Aorta (tissue), 5 donors: ENCODE measurements at regions of chr1 and their contacts with region 1.

Region 1: DNA sequence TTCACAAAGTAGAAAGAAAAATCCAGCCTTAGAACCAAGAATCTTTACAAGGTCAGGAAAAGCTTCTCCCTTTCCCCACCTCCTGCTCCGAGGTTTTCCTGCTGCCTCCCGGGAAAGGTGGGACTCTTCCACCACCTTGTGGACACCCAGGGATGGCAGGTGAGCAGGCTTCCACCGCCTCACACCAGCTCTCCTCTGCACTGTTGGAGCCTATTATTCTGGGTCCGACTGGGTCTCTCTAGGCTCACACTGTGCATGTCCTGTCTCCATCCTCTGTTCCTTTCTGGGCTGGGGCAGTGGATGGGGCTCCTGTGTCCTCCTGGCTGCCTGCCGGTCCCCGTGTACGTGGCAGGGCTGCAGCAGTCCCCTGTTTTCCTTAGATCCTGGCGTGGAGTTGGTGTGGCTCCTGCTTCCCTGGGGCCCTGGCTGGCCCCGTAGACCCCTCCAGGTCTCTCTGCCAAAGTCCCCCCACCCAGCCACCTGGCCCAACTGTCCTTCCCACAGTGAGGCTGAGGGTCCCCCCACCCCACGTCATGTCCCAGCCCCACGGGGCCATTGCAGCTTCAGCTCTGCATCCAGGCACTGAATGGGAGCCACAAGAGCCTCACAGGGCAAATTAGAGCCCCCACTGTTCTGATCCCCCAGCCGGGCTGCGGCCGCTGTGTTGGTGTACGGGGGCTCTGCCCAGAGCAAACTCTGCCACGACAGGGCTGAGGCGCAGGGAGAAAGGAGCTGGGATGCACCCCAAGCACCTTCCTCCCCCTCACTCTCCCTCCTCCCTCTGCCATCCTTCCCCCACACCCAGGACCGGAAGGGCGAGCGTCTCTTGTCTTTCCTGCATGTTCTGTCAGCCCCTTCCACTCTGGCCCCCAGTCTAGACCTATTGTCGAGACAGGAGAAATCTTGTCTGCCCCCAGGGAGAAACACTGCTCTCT is 3.3 kb upstream of the SLC45A1 start:
- DNase-seq: peak; percentile 83 to 89
- ATAC-seq: peak; percentile 77
- H3K4me3 ChIP-seq: no peak overlapping the region
- H3K27ac ChIP-seq: no peak overlapping the region
- H3K4me1 ChIP-seq: no peaks in the 10 kb centered on the region
- H3K27me3 ChIP-seq: no peaks in the 10 kb centered on the region

Region 2: DNA sequence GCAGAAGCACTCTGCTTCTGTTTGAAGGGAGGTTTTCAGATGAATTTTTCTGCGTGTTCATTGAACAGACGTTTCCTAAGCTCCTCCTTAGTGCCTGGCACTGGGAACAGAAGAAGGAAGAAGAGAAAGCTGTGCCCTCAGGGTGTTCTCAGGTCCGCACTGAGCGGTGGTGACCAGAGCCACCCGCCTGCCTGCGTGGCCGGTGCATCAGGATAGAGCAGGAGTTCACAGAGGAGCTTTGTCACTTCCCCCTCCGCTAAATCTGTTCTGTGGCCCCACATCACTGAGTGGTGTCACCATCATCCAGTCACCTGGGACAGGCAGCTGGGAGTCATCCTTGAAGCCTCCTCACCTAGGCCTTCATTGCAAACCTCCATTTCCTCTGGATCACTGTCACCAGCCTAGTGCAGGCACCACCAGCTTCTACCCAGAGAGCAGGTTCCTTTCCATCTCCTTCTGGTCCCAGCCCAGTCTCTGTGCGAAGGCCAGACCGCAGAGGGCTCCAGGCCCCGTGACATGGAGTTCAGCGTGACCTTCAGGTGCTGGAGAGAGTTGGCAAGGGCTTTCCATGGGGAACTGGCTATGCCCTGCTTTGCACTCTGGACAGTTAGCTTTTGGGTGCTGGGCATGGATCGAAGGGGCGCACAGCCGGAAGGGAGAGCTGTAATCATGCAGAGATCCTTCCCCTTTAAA is 331.4 kb before region 1 on chr1:
- intact Hi-C with region 1: loop called (anchors 2 to 5 kb)
- DNase-seq: peak in 1 of 2 donors; percentile 59
- ATAC-seq: no peak
- H3K4me3 ChIP-seq: no peak overlapping the region
- H3K27ac ChIP-seq: no peak overlapping the region
- H3K4me1 ChIP-seq: no peaks in the 10 kb centered on the region
- H3K27me3 ChIP-seq: no peaks in the 10 kb centered on the region

Region 3: GRCh38 chr1:8026153-8026975 is 288.2 kb before region 1 on chr1 and contains the start of gene ERRFI1:
- intact Hi-C with region 1: loop called in 1 of 2 experiments (anchors 1 kb)
- DNase-seq: peak; percentile 96 to 98
- ATAC-seq: peak; percentile 95
- H3K4me3 ChIP-seq: peak within 1 kb of the TSS; percentile 77 to 98
- H3K27ac ChIP-seq: peak within 1 kb of the TSS; percentile 90 to 91
- H3K4me1 ChIP-seq: peaks cover 2 to 5% of the 10 kb centered on the region in 2 donors
- H3K27me3 ChIP-seq: no peaks in the 10 kb centered on the region
- total RNA-seq, gene ERRFI1: 153 to 258 TPM

Region 4: GRCh38 chr1:8137481-8138244 is 176.9 kb before region 1 on chr1:
- intact Hi-C with region 1: loop called in 1 of 2 experiments (anchors 5 kb)
- DNase-seq: peak in 1 of 2 donors; percentile 75
- ATAC-seq: peak; percentile 71
- H3K4me3 ChIP-seq: no peak overlapping the region
- H3K27ac ChIP-seq: peak overlapping the region; percentile 57 to 85
- H3K4me1 ChIP-seq: peaks cover 3 to 9% of the 10 kb centered on the region in 2 donors
- H3K27me3 ChIP-seq: no peaks in the 10 kb centered on the region

Region 5: DNA sequence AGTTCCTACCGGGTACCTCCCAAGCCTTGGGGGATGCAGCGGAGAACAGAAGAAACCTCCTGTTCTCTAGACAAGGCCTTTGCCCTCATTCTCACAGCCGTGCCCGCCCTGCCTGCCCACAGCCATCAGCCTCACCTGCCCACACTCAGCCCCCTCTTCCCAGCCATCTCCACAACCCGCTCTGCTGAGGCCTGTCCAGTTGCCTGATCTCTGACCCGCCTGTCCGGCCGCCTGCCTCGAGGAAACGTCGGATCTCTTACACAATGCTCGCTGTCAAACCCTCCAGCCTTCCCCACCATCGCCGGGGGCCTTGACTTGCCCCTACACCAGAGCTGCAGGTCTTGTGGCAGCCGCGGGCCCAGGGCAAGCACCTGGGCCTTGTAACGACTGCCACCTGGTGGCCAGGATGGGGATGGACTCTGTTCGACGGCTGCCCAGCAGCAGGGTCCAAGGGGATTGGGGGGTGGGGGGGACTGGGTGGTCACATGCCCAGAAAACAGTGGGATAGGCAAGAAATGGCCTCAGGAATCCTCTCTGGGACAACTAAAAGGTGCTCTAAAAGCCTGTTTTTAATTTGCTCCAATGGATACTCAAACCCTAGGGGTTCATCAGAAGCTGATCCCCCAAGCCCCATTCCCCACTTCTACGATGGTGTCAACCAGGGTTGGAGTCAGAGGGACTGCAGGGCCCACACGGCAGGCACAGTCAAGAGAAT is 34.3 kb after region 1 on chr1:
- intact Hi-C with region 1: loop called in 1 of 2 experiments (anchors 5 kb)
- DNase-seq: peak; percentile 80 to 89
- ATAC-seq: peak; percentile 79
- H3K4me3 ChIP-seq: no peak overlapping the region
- H3K27ac ChIP-seq: no peak overlapping the region
- H3K4me1 ChIP-seq: no peaks in the 10 kb centered on the region
- H3K27me3 ChIP-seq: no peaks in the 10 kb centered on the region